ENCODE measurements at regions of chr19 and their contacts with region 1.

Region 1: GRCh38 chr19:12983542-12984142 is 11.6 kb upstream of the NFIX start:
- DNase-seq: peak; percentile 83 to 91 (median 90)
- ATAC-seq: peak; percentile 84
- H3K4me3 ChIP-seq: no peak overlapping the region
- H3K4me1 ChIP-seq: peaks cover 16% of the 10 kb centered on the region
- CTCF ChIP-seq: peak; percentile 95

Region 2: GRCh38 chr19:12580163-12580694 is 403.4 kb before region 1 on chr19:
- intact Hi-C with region 1: no loop called
- DNase-seq: no peak
- ATAC-seq: no peak
- H3K4me3 ChIP-seq: no peak overlapping the region
- H3K4me1 ChIP-seq: no peaks in the 10 kb centered on the region
- CTCF ChIP-seq: no peak

Region 3: DNA sequence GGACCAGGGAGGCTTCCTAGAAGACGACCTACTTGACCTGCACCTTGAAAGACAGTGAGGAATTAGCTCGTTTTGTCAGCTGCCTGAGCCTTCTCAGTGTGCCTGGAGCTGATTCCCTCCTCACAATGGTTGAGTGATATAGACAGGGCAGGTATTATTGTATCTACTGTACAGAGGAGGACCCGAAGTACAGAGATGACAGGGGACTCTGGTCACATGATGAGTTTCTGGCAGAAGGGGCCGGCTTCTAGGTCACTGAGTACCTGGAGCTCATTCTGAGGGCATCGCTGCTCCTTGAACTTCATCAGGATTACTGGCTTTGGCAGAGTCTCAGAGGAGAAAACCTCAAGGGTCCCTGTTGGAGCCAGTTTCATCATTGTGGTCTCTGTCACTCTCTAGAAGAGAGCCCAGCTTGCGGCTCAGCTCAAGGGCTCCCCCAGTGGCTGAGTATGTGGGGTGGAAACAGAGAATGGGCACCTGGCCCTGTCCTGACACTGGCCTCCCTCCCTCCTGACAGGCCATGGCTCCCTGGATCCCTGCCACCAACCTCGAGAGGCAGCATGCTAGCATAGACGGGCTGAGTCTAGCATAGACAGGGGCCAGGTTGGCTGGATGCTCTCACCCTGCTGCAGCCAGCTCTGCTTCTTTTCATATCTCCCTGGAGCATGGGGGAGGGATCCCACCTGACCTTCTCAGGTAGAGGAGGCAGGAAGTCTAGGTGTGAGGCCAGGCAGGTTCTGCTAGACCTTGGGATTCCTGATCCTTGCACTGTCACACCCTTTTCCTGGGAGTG is 50.4 kb after region 1 on chr19:
- intact Hi-C with region 1: loop called in 1 of 2 experiments (anchors 5 kb)
- DNase-seq: peak; percentile 80 to 89 (median 88)
- ATAC-seq: peak; percentile 85
- H3K4me3 ChIP-seq: no peak overlapping the region
- H3K4me1 ChIP-seq: peaks cover 57% of the 10 kb centered on the region
- CTCF ChIP-seq: peak; percentile 56

Region 4: GRCh38 chr19:13093407-13094105 is 109.9 kb after region 1 on chr19:
- intact Hi-C with region 1: loop called (anchors 5 to 10 kb)
- DNase-seq: peak; percentile 76 to 89 (median 87)
- ATAC-seq: peak; percentile 78
- H3K4me3 ChIP-seq: no peak overlapping the region
- H3K4me1 ChIP-seq: peaks cover 21% of the 10 kb centered on the region
- CTCF ChIP-seq: peak; percentile 78

Region 5: GRCh38 chr19:13451434-13451995 is 467.9 kb after region 1 on chr19:
- intact Hi-C with region 1: no loop called
- DNase-seq: no peak
- ATAC-seq: no peak
- H3K4me3 ChIP-seq: no peak overlapping the region
- H3K4me1 ChIP-seq: no peaks in the 10 kb centered on the region
- CTCF ChIP-seq: no peak

Measured in mucosa of descending colon (tissue), 3 donors.